ENCODE measurements at regions of chr13 and their contacts with region 1.

Region 1: DNA sequence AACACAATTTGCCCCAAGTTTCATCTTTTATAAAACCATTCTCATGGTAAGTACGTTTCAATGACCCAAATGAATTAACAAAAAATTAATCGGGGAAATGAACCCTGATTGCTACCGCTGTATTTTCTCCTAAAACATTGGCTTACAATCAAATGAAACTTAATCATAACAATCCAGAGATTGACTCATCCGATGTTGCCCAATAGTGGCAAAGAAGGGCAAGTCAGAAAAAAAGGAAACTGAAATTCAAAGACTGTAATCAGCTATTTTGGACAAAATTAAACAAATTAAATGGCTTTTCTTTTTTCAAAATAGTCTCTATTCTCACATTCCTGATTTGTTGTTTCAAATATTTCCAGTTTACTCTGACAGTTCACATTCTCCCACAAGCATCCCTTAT is 3.9 kb upstream of the ACOD1 start:
- DNase-seq: peak; percentile 7
- H3K4me3 ChIP-seq: no peak overlapping the region
- H3K27ac ChIP-seq: no peak overlapping the region
- H3K27me3 ChIP-seq: no peaks in the 10 kb centered on the region
- CTCF ChIP-seq: no peak

Region 2: DNA sequence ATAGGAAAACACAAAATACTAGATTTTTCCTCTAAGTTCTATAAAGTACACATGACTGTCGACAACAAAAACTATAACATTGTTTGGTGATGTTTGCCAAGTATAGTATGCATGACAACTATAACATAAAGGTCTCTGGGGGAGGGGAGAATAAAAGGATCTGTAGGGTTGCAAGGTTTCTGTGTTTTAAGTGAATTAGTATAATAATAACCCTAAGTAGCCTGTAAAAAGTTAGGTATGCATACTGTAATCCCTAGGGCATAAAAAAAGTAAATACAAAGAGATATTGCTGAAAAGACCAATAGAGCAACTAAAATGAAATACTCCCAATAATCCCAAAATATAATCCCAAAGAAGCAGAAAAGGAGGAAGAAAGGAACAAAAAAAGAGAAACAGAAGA is 367.9 kb after region 1 on chr13:
- CTCF ChIA-PET with region 1: no interaction called
- POLR2A ChIA-PET with region 1: interaction called, 10 read pairs
- DNase-seq: no peak
- H3K4me3 ChIP-seq: no peak overlapping the region
- H3K27ac ChIP-seq: no peak overlapping the region
- H3K27me3 ChIP-seq: no peaks in the 10 kb centered on the region
- CTCF ChIP-seq: no peak

Region 3: DNA sequence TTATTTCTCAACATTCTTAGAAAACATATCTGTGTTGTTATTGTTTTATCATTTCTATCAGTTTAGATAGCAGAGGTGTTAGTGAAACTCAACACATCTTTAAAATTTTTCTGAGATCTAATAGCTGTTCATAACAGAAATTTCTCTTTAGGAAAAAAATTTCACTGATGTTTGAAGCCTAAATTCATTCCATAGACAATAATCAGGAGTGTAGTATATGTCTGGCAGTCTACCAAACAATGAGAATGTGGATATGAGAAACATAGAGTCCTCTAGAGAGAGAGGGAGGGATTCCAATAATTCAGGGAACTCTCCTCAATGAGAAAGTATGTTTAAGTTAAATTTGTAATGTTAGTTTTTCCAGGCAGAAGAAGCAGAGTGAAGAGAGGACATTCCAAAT is 1092.4 kb after region 1 on chr13:
- CTCF ChIA-PET with region 1: no interaction called
- POLR2A ChIA-PET with region 1: no interaction called
- DNase-seq: no peak
- H3K4me3 ChIP-seq: no peak overlapping the region
- H3K27ac ChIP-seq: no peak overlapping the region
- H3K27me3 ChIP-seq: no peaks in the 10 kb centered on the region
- CTCF ChIP-seq: no peak

Measured in AG04450 (cell line).